Dorsolateral prefrontal cortex (tissue), 120 donors: ENCODE measurements at regions of chr19 and their contacts with region 1.

Region 1: DNA sequence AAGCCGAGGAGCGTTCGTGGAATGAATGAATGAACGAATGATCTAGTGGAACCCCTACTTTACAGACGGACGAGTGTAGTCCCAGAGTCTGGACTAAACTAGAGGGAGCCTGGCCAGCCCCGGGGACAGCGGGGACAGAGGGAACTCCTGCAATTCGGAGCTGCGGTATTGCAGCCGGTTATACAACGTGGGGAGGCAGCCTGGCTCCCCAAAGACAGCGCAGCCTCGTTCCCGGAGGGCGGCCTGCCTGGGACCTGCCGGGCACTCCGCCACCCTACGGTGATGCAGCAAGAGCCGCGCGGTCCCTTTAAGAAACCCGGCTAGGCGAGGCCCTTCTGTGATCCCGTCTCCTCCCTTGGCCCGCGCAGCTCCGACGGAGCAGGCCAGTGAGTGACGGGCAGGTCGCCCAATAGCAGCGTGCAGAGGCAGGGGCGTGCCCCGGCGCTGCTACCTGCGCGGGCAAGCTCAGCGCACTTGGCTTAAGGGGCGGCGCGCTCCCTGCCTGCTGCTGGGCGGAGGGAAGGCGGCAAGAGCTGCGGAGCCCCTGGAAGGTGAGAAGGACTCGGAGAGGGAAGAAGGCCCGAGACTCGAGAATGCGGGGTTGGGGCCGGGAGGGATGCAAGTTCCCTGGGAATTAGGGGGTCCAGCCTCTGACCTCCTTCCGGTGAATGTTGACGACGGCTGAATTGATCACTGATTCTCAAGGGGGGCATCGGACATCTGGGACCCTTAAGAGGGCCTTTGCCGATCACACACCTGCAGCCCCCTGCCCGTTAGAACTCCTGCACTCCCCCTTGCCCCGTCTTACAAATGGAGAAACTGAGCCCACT is at the start of gene ABCA7:
- DNase-seq: peak; percentile 92 to 99 (median 98)
- H3K4me3 ChIP-seq: peak within 1 kb of the TSS; percentile 56 to 92 (median 74)
- H3K27ac ChIP-seq: peak within 1 kb of the TSS in 23 of 59 donors; percentile 3 to 69 (median 37)
- H3K27me3 ChIP-seq: no peaks in the 10 kb centered on the region
- CTCF ChIP-seq: peak in 27 of 56 donors; percentile 9 to 42 (median 20)
- total RNA-seq, gene ABCA7: 12.5 to 56.5 (median 28.1) TPM

Region 2: GRCh38 chr19:1020868-1021425 is 18.9 kb before region 1 on chr19 and contains the start of gene TMEM259:
- intact Hi-C with region 1: loop called in 1 of 2 experiments (anchors 2 kb)
- DNase-seq: peak; percentile 96 to 99 (median 98)
- H3K4me3 ChIP-seq: peak within 1 kb of the TSS; percentile 43 to 95 (median 84)
- H3K27ac ChIP-seq: peak within 1 kb of the TSS; percentile 54 to 99 (median 95)
- H3K27me3 ChIP-seq: peaks cover 0 to 17% (median 4%) of the 10 kb centered on the region in 45 donors
- CTCF ChIP-seq: peak in 43 of 56 donors; percentile 4 to 61 (median 40)
- total RNA-seq, gene TMEM259: 98.2 to 236 (median 132) TPM

Region 3: GRCh38 chr19:1094975-1095701 is 55.3 kb after region 1 on chr19 and contains the start of gene POLR2E:
- intact Hi-C with region 1: loop called in 1 of 2 experiments (anchors 5 kb)
- DNase-seq: peak; percentile 98 to 100 (median 99)
- H3K4me3 ChIP-seq: peak within 1 kb of the TSS; percentile 64 to 100 (median 91)
- H3K27ac ChIP-seq: peak within 1 kb of the TSS in 55 of 59 donors; percentile 19 to 92 (median 74)
- H3K27me3 ChIP-seq: no peaks in the 10 kb centered on the region
- CTCF ChIP-seq: peak in 36 of 56 donors; percentile 6 to 53 (median 28)
- total RNA-seq, gene POLR2E: 114 to 230 (median 158) TPM